T-cell (primary cell): ENCODE measurements at regions of chr1 and their contacts with region 1.

Region 1: GRCh38 chr1:26799479-26800142 is 11.9 kb downstream of the PIGV start:
- DNase-seq: peak in 2 of 35 experiments; percentile 13 to 41
- ATAC-seq: peak; percentile 60 to 66 (median 66)
- H3K4me3 ChIP-seq: no peak overlapping the region
- H3K4me3 Mint-ChIP-seq: peak overlapping the region; percentile 49 to 72 (median 63)
- H3K27ac ChIP-seq: peak overlapping the region; percentile 82
- H3K27ac Mint-ChIP-seq: peak overlapping the region; percentile 96 to 97
- H3K4me1 ChIP-seq: peaks cover 13 to 33% of the 10 kb centered on the region in 2 experiments
- H3K4me1 Mint-ChIP-seq: peaks cover 33 to 36% (median 35%) of the 10 kb centered on the region in 3 donors
- H3K27me3 ChIP-seq: no peaks in the 10 kb centered on the region
- H3K27me3 Mint-ChIP-seq: no peaks in the 10 kb centered on the region

Region 2: DNA sequence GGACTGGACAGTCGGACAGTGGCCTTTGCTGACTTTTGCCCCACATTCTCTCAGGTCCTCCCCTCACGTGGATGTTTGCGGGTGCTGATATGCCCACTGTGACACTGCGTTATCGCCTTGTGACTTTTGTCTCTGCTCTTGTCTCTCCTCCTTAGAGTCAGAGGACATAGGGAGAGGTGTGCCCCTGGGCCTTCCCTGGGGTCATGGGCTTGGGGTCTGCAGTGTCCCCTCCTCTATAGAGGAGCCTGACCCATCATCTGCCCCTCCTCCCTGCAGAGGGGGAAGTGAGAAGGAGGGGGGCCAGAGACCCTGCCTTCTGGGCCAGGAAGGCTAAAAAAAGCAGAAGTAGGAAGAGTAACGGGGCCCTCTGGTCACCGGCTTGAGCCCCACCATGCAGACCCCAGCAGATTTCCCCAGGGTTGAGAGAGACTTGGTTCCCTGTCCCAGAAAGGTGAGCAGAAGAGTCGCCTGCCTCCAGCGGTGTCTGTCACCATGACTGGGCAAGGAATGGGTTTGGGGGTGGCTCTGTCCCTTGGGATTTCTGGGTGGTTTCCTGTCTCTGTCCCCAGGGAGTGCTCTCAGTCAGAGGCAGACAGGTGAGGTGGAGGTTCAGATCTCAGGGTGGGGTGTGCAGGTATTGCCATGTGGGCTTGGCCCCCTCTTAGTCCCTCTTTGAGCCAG is 256.7 kb before region 1 on chr1:
- CTCF ChIA-PET with region 1: no interaction called
- POLR2A ChIA-PET with region 1: no interaction called
- DNase-seq: no peak
- ATAC-seq: no peak
- H3K4me3 ChIP-seq: peak overlapping the region in 1 of 2 donors; percentile 36
- H3K4me3 Mint-ChIP-seq: peak overlapping the region; percentile 69 to 79 (median 72)
- H3K27ac ChIP-seq: peak overlapping the region; percentile 91
- H3K27ac Mint-ChIP-seq: peak overlapping the region; percentile 97
- H3K4me1 ChIP-seq: peaks cover 57 to 99% of the 10 kb centered on the region in 2 experiments
- H3K4me1 Mint-ChIP-seq: peaks cover 90 to 93% (median 91%) of the 10 kb centered on the region in 3 donors
- H3K27me3 ChIP-seq: no peaks in the 10 kb centered on the region
- H3K27me3 Mint-ChIP-seq: no peaks in the 10 kb centered on the region

Region 3: GRCh38 chr1:26811708-26812107 is 12.1 kb after region 1 on chr1:
- CTCF ChIA-PET with region 1: interaction called, 4 to 25 read pairs
- POLR2A ChIA-PET with region 1: no interaction called
- DNase-seq: no peak
- ATAC-seq: no peak
- H3K4me3 ChIP-seq: no peak overlapping the region
- H3K4me3 Mint-ChIP-seq: no peak overlapping the region
- H3K27ac ChIP-seq: no peak overlapping the region
- H3K27ac Mint-ChIP-seq: no peak overlapping the region
- H3K4me1 ChIP-seq: peaks cover 0 to 14% of the 10 kb centered on the region in 2 experiments
- H3K4me1 Mint-ChIP-seq: peaks cover 11 to 15% (median 11%) of the 10 kb centered on the region in 3 donors
- H3K27me3 ChIP-seq: no peaks in the 10 kb centered on the region
- H3K27me3 Mint-ChIP-seq: no peaks in the 10 kb centered on the region

Region 4: GRCh38 chr1:26853156-26853555 is 53.5 kb after region 1 on chr1:
- CTCF ChIA-PET with region 1: no interaction called
- POLR2A ChIA-PET with region 1: no interaction called
- DNase-seq: peak; percentile 53 to 86 (median 72)
- ATAC-seq: peak; percentile 80 to 87 (median 84)
- H3K4me3 ChIP-seq: no peak overlapping the region
- H3K4me3 Mint-ChIP-seq: no peak overlapping the region
- H3K27ac ChIP-seq: no peak overlapping the region
- H3K27ac Mint-ChIP-seq: no peak overlapping the region
- H3K4me1 ChIP-seq: no peaks in the 10 kb centered on the region
- H3K4me1 Mint-ChIP-seq: peaks cover 0 to 5% (median 4%) of the 10 kb centered on the region in 3 donors
- H3K27me3 ChIP-seq: no peaks in the 10 kb centered on the region
- H3K27me3 Mint-ChIP-seq: no peaks in the 10 kb centered on the region

Region 5: DNA sequence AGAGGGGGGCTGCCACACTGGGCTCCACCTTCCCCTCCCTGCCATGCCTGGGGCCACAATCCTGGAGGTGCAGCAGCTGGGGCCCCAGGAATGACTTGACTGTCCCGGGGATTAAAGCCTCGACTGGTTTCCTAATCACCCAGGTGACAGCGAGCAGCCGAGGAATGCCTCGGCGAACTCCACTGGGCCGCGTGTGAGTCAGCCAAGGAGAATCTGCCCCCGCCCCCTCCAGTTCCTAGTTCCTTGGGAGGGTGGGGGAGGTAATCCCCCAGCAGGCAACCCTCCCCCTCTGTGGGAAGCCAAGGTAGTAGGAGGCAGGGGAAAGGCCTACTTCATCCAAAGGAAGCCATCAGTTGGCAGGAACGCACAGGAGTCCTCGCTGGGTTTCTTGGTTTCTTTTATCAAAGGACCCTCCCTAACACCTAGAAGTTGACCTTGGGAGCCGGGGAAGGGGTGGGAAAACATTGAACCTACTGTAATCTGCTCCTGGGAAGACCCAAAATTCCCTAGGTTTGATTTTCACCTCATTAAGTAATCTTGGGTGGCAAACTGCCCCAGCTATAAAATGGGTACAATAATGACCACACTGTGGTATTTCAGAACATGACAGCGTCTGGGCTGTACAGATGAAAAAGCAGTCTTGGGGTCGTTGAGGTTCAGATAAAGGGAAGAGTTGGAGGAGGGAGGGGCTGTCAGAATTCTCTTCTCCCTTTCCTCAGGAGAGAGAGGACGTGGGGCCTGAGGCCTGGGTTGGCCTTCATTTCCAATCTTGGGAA is 211.6 kb after region 1 on chr1:
- CTCF ChIA-PET with region 1: no interaction called
- POLR2A ChIA-PET with region 1: interaction called in 1 of 2 experiments, 11 read pairs
- DNase-seq: no peak
- ATAC-seq: no peak
- H3K4me3 ChIP-seq: no peak overlapping the region
- H3K4me3 Mint-ChIP-seq: peak overlapping the region in 2 of 3 donors; percentile 47 to 77
- H3K27ac ChIP-seq: no peak overlapping the region
- H3K27ac Mint-ChIP-seq: no peak overlapping the region
- H3K4me1 ChIP-seq: peaks cover 0 to 11% of the 10 kb centered on the region in 2 experiments
- H3K4me1 Mint-ChIP-seq: peaks cover 5 to 11% (median 6%) of the 10 kb centered on the region in 3 donors
- H3K27me3 ChIP-seq: peaks cover 8 to 55% of the 10 kb centered on the region in 2 experiments
- H3K27me3 Mint-ChIP-seq: peaks cover 6 to 37% of the 10 kb centered on the region in 2 donors